Activated CD4-positive, alpha-beta T cell treated with anti-CD3 and anti-CD28 coated beads for 36 hours (primary cell): ENCODE measurements at regions of chr6 and their contacts with region 1.

Region 1: DNA sequence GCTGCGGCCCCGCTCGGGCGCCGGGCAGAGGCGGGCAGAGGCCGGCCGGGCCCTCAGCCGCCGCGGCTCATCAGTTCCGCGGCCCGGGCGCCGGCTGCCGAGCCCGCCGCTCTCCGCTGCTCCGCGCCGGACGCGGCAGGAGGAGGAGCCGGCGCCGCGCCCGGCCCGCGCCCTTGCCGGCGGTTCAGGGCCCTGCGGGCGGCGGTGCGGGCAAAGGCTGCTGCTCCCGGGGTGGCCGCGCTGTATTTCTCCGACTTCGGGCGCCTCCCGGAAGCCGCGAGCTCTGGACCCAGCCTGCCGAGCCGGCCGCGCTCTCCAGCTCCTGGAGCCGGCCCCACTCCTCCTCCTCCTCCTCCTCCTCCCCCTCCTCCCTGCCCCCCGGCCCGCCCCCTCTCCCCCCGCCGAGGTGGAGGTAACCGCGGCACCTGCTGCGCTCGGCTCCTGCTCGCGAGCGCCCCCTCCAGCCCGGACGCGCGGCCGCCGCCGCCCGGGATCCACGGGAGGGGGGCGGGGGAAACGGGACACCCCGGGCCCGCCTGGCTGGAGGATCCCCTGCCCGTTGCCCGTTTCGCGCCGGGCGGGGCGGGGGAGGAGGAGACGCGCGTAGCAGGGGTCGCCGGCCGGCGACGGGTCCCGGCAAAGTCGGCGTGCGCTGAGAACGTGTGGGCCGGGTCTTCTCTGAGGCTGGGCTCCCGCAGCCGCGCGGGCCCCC is at the start of gene SLC22A23:
- DNase-seq: peak; percentile 84
- ATAC-seq: peak; percentile 67
- H3K4me3 Mint-ChIP-seq: peak within 1 kb of the TSS; percentile 70
- H3K27ac Mint-ChIP-seq: peak within 1 kb of the TSS; percentile 47
- H3K4me1 Mint-ChIP-seq: peaks cover 5% of the 10 kb centered on the region
- H3K27me3 Mint-ChIP-seq: peaks cover 23% of the 10 kb centered on the region
- total RNA-seq, gene SLC22A23: 0.37 to 0.39 TPM

Region 2: GRCh38 chr6:3125815-3126214 is 331.1 kb before region 1 on chr6:
- CTCF ChIA-PET with region 1: no interaction called
- POLR2A ChIA-PET with region 1: no interaction called
- intact Hi-C with region 1: loop called in 1 of 2 experiments (anchors 5 kb)
- DNase-seq: no peak
- ATAC-seq: no peak
- H3K4me3 Mint-ChIP-seq: no peak overlapping the region
- H3K27ac Mint-ChIP-seq: no peak overlapping the region
- H3K4me1 Mint-ChIP-seq: peaks cover 10% of the 10 kb centered on the region
- H3K27me3 Mint-ChIP-seq: no peaks in the 10 kb centered on the region

Region 3: DNA sequence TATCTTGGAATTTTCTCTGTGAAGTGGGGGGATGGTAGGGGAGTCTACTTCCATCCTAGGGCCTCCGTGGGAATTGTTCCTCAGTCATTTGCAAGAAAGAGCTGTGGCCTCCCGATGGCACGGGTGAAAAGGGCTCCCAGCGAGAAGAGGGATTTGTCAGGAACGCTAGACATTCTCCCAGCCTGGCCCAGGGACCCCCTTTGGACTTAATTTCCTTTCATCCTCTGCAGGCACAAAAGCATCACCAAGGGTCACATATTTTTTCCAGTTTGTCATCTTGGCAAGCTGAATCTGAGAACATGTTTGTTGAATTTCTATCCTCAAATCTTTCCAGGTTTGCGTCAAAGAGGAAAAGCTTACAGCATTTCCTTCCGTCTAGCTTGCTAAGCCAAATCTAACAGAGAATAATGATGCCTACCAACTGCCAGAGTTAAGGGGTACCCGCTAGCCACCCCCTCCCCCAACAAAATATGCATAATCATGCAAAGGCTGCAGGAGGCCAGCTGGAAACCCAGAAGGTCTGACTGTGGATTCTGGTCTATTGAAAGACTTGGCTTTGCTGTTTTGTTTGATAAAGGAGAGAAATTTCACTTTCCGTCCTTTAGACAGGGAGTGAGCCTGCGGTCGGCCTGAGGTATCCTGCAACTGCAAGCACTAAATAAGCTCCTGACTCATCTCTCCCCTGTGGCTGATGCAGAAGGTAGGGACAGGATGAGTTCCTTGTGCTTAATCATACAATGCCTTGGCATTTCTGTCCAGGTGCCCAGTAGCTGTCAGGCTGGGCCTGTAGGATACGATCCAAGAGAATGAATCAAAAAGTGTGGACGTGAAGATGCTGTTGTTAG is 175.1 kb before region 1 on chr6:
- CTCF ChIA-PET with region 1: no interaction called
- POLR2A ChIA-PET with region 1: no interaction called
- intact Hi-C with region 1: loop called (anchors 1 kb)
- DNase-seq: no peak
- ATAC-seq: no peak
- H3K4me3 Mint-ChIP-seq: no peak overlapping the region
- H3K27ac Mint-ChIP-seq: no peak overlapping the region
- H3K4me1 Mint-ChIP-seq: peaks cover 3% of the 10 kb centered on the region
- H3K27me3 Mint-ChIP-seq: no peaks in the 10 kb centered on the region

Region 4: DNA sequence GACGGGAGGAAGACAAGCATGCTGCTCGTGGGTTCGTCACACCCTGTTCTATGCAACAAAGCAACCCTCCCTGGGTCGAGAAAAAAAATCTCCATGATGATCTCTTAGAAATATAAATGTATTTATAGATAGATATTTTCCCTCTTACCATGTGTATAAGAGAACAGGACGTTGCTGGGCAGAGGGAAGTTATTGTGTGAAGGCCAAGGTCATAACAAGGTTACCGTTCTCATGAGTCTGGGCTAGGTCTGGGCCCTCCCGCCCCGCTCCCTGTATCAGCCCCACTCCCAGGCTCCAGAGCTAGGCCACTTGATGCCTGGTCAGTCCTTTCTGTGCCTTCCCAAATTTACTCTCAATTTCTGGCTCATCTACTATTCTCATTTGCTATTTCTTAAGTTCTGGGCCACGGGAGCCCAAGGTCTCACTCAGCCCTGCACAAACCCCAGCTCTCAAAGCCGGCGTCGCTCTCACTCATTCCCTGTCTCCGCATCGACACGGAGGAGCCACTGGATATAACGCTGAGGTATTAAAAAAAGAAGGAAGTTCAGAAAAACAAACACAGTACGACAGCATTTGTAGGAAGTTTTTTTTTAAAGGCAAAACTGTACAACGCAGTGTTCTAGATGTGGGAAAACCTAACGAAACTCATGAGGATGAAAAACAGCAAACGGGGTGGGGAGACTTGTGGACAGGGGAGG is 101.4 kb before region 1 on chr6:
- CTCF ChIA-PET with region 1: no interaction called
- POLR2A ChIA-PET with region 1: no interaction called
- intact Hi-C with region 1: loop called in 1 of 2 experiments (anchors 2 kb)
- DNase-seq: no peak
- ATAC-seq: peak; percentile 21
- H3K4me3 Mint-ChIP-seq: peak overlapping the region; percentile 58
- H3K27ac Mint-ChIP-seq: peak overlapping the region; percentile 59
- H3K4me1 Mint-ChIP-seq: peaks cover 18% of the 10 kb centered on the region
- H3K27me3 Mint-ChIP-seq: no peaks in the 10 kb centered on the region

Region 5: GRCh38 chr6:3410385-3411360 is 46.2 kb before region 1 on chr6:
- CTCF ChIA-PET with region 1: interaction called, 4 read pairs
- POLR2A ChIA-PET with region 1: no interaction called
- intact Hi-C with region 1: loop called (anchors 1 to 2 kb)
- DNase-seq: peak; percentile 79
- ATAC-seq: no peak
- H3K4me3 Mint-ChIP-seq: no peak overlapping the region
- H3K27ac Mint-ChIP-seq: no peak overlapping the region
- H3K4me1 Mint-ChIP-seq: peaks cover 12% of the 10 kb centered on the region
- H3K27me3 Mint-ChIP-seq: no peaks in the 10 kb centered on the region

Region 6: GRCh38 chr6:3442431-3443220 is 14.3 kb before region 1 on chr6:
- CTCF ChIA-PET with region 1: interaction called, 12 read pairs
- POLR2A ChIA-PET with region 1: no interaction called
- intact Hi-C with region 1: no loop called
- DNase-seq: no peak
- ATAC-seq: no peak
- H3K4me3 Mint-ChIP-seq: no peak overlapping the region
- H3K27ac Mint-ChIP-seq: no peak overlapping the region
- H3K4me1 Mint-ChIP-seq: peaks cover 3% of the 10 kb centered on the region
- H3K27me3 Mint-ChIP-seq: no peaks in the 10 kb centered on the region

Region 7: GRCh38 chr6:4135665-4136353 is 678.9 kb after region 1 on chr6:
- CTCF ChIA-PET with region 1: no interaction called
- POLR2A ChIA-PET with region 1: no interaction called
- intact Hi-C with region 1: loop called in 1 of 2 experiments (anchors 5 kb)
- DNase-seq: peak; percentile 98
- ATAC-seq: peak; percentile 92
- H3K4me3 Mint-ChIP-seq: peak overlapping the region; percentile 79
- H3K27ac Mint-ChIP-seq: peak overlapping the region; percentile 85
- H3K4me1 Mint-ChIP-seq: peaks cover 46% of the 10 kb centered on the region
- H3K27me3 Mint-ChIP-seq: no peaks in the 10 kb centered on the region